ENCODE measurements at regions of chr11 and their contacts with region 1.

Region 1: GRCh38 chr11:27472398-27473016 is at the start of gene LGR4:
- DNase-seq: peak; percentile 98
- H3K4me3 Mint-ChIP-seq: peak within 1 kb of the TSS; percentile 79
- H3K27ac Mint-ChIP-seq: peak within 1 kb of the TSS; percentile 79
- H3K4me1 Mint-ChIP-seq: peaks cover 31% of the 10 kb centered on the region
- H3K27me3 Mint-ChIP-seq: no peaks in the 10 kb centered on the region
- CTCF ChIP-seq: no peak
- total RNA-seq, gene LGR4: 14.2 and 14.8 TPM in 2 replicates

Region 2: GRCh38 chr11:27362749-27363575 is 109.5 kb before region 1 on chr11 and contains the start of gene CCDC34:
- CTCF ChIA-PET with region 1: interaction called, 4 read pairs
- POLR2A ChIA-PET with region 1: interaction called, 8 read pairs
- intact Hi-C with region 1: loop called (anchors 1 kb)
- DNase-seq: peak; percentile 94
- H3K4me3 Mint-ChIP-seq: peak within 1 kb of the TSS; percentile 93
- H3K27ac Mint-ChIP-seq: peak within 1 kb of the TSS; percentile 93
- H3K4me1 Mint-ChIP-seq: peaks cover 19% of the 10 kb centered on the region
- H3K27me3 Mint-ChIP-seq: no peaks in the 10 kb centered on the region
- CTCF ChIP-seq: no peak
- total RNA-seq, gene CCDC34: 9.0 and 11.1 TPM in 2 replicates

Region 3: DNA sequence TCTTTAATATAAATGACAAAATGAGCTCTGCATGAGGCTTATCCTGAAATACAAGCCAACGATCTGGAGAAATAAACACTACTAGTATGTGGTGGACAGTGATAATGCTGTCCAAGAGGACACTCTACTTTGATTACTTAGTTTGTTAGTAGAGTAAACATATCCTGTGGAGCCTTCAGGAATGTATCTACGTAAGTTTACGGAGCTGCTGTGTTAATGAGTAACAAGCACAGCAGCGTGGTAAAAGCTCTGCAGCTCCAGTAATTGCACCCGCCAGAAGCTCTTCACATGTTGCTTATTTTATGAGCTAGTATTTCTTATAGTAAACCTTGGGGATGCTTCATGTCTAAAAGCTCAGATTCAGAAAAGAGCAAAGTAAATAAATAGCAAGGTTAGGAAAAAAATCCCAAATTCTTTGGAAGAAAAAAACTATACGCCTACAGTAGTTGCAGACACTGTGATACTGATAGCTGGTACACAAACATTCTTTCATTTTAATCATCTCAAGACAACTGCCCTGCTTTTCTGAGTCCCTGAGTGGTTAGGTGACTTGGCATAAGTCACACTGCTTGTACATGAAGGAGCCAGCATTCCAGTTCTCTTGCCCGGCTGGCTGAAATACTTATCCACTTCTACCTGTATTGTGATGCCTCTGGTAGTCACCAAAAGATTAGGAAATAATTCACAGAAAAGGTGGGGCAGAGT is 76.8 kb before region 1 on chr11:
- CTCF ChIA-PET with region 1: no interaction called
- POLR2A ChIA-PET with region 1: interaction called, 10 read pairs
- intact Hi-C with region 1: loop called (anchors 5 kb)
- DNase-seq: peak; percentile 23
- H3K4me3 Mint-ChIP-seq: no peak overlapping the region
- H3K27ac Mint-ChIP-seq: peak overlapping the region; percentile 40
- H3K4me1 Mint-ChIP-seq: peaks cover 31% of the 10 kb centered on the region
- H3K27me3 Mint-ChIP-seq: no peaks in the 10 kb centered on the region
- CTCF ChIP-seq: no peak

Region 4: DNA sequence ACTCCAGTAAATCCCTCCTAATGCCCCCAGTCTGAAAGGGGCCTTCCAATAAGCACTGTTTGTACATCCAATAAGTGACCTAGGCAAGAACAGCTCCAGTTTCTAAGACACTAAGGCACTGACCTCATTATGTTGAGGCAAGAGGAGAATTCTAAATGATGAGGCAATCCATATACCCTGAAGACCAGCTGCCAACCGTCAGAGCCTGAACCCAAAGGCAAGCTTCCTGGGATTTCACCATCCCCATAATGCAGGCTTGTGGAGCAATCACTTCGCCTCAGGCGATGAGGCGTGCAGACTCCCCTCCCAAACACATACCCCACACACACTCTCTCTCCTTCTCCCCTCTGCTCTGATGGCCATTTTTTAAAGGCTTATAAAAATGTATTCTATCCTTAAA is 49.4 kb before region 1 on chr11:
- CTCF ChIA-PET with region 1: interaction called, 3 read pairs
- POLR2A ChIA-PET with region 1: interaction called, 55 read pairs
- intact Hi-C with region 1: loop called (anchors 2 kb)
- DNase-seq: peak; percentile 87
- H3K4me3 Mint-ChIP-seq: no peak overlapping the region
- H3K27ac Mint-ChIP-seq: peak overlapping the region; percentile 68
- H3K4me1 Mint-ChIP-seq: peaks cover 51% of the 10 kb centered on the region
- H3K27me3 Mint-ChIP-seq: no peaks in the 10 kb centered on the region
- CTCF ChIP-seq: no peak

Region 5: GRCh38 chr11:27443746-27444507 is 28.6 kb before region 1 on chr11:
- CTCF ChIA-PET with region 1: interaction called, 3 read pairs
- POLR2A ChIA-PET with region 1: interaction called, 32 read pairs
- intact Hi-C with region 1: no loop called
- DNase-seq: no peak
- H3K4me3 Mint-ChIP-seq: no peak overlapping the region
- H3K27ac Mint-ChIP-seq: no peak overlapping the region
- H3K4me1 Mint-ChIP-seq: peaks cover 14% of the 10 kb centered on the region
- H3K27me3 Mint-ChIP-seq: no peaks in the 10 kb centered on the region
- CTCF ChIP-seq: no peak

Measured in MCF 10A (cell line).